OCI-LY7 (cell line): ENCODE measurements at regions of chr9 and their contacts with region 1.

Region 1: DNA sequence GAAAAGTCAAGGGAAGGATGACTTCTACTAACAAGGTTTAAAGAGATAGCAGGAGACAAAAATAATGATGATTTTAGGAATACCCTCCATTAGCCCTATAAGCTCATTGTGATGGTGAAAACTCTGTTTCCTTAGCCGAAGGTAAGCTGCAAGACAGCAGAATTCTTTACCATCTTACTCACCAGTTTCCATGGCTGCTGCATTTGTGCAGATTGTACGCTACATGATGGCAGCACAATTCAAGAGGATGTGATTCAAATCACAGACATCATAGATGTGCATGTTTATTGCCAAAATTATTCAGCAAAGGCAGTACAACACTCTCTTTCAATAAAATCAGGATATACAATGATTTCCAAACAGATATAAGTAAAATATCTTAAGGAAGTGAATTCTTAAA is 175.6 kb downstream of the SPATA31D1 start:
- DNase-seq: no peak
- H3K4me3 ChIP-seq: no peak overlapping the region
- H3K27ac ChIP-seq: no peak overlapping the region
- H3K4me1 ChIP-seq: peaks cover 9% of the 10 kb centered on the region
- CTCF ChIP-seq: no peak

Region 2: DNA sequence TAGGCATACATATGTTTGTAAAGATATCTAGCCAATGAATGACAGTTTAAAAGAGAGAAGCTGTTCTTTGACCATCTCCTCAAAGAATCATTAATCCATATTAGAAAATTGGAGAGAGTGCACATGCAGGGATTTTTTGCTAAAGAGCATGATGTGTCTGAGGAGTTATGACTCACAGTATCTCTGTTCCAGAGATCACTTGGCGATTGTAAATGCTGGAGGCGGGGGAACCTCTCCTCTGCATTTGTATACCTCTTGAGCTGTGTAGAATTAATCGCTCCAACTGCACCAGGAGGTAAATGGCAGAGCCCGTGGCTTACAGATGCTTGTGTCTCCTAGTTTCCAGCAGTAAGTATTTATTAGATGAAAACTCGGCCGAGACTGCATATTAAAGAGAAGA is 179.2 kb before region 1 on chr9:
- CTCF ChIA-PET with region 1: no interaction called
- POLR2A ChIA-PET with region 1: no interaction called
- intact Hi-C with region 1: no loop called
- DNase-seq: no peak
- H3K4me3 ChIP-seq: no peak overlapping the region
- H3K27ac ChIP-seq: no peak overlapping the region
- H3K4me1 ChIP-seq: no peaks in the 10 kb centered on the region
- CTCF ChIP-seq: no peak

Region 3: GRCh38 chr9:82148901-82149461 is 15.2 kb before region 1 on chr9:
- CTCF ChIA-PET with region 1: interaction called, 3 read pairs
- POLR2A ChIA-PET with region 1: interaction called, 12 read pairs
- intact Hi-C with region 1: no loop called
- DNase-seq: no peak
- H3K4me3 ChIP-seq: no peak overlapping the region
- H3K27ac ChIP-seq: no peak overlapping the region
- H3K4me1 ChIP-seq: no peaks in the 10 kb centered on the region
- CTCF ChIP-seq: no peak

Region 4: DNA sequence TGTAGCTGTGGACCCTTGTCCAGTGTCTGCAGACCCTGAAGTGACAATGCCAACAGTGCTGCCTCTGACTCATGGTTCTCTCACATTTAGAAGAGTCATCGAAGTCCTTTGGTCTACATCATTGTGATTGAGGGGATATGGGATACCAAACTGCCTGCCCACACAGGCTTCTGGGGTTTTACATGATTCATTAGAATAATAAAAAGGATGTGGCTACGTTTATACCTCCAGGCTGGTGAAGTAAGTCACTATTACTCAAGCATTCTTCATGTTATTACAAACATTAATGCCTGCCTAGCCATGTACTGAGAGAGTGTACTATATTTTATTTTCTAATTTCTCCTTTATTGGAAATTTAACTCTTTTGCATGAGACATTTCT is 190.1 kb after region 1 on chr9:
- CTCF ChIA-PET with region 1: no interaction called
- POLR2A ChIA-PET with region 1: no interaction called
- intact Hi-C with region 1: no loop called
- DNase-seq: no peak
- H3K4me3 ChIP-seq: no peak overlapping the region
- H3K27ac ChIP-seq: no peak overlapping the region
- H3K4me1 ChIP-seq: no peaks in the 10 kb centered on the region
- CTCF ChIP-seq: no peak

Region 5: DNA sequence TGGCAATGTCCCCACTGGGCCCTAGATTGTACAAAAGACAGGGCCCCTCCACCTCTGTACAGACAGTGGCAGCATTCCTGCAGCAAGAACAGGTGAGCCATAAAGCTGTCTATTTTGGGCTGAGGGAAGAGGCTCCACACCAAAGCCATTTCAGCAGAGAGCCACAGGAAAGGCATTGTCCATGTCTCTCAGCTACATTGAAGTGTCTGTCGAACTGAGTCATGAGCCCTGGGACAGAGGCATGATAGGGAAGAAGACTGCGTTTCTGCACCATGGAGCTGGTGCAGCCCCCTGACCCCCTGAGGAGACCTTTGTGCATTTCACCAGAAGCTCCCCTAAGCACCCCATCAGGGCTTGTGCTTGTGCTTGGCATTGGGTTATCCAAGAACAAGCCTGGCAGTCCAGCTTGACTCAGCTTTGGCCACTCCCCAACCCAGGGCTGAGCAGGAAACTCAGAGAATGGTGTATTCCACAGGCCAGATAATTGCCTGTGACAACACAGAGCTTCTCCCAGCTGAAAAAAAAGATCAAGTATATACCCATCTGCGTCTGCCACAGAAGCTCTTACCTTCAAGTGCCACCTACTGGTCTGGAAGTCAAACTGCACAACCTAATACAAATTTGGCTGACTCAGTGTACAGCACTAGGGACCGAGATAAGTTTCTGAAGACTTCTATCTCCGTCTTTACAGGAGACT is 1380.0 kb after region 1 on chr9:
- CTCF ChIA-PET with region 1: no interaction called
- POLR2A ChIA-PET with region 1: no interaction called
- intact Hi-C with region 1: no loop called
- DNase-seq: peak; percentile 53
- H3K4me3 ChIP-seq: no peak overlapping the region
- H3K27ac ChIP-seq: no peak overlapping the region
- H3K4me1 ChIP-seq: no peaks in the 10 kb centered on the region
- CTCF ChIP-seq: peak; percentile 86